Activated CD4-positive, alpha-beta memory T cell treated with anti-CD3 and anti-CD28 coated beads for 36 hours (primary cell): ENCODE measurements at regions of chr12 and their contacts with region 1.

Region 1: DNA sequence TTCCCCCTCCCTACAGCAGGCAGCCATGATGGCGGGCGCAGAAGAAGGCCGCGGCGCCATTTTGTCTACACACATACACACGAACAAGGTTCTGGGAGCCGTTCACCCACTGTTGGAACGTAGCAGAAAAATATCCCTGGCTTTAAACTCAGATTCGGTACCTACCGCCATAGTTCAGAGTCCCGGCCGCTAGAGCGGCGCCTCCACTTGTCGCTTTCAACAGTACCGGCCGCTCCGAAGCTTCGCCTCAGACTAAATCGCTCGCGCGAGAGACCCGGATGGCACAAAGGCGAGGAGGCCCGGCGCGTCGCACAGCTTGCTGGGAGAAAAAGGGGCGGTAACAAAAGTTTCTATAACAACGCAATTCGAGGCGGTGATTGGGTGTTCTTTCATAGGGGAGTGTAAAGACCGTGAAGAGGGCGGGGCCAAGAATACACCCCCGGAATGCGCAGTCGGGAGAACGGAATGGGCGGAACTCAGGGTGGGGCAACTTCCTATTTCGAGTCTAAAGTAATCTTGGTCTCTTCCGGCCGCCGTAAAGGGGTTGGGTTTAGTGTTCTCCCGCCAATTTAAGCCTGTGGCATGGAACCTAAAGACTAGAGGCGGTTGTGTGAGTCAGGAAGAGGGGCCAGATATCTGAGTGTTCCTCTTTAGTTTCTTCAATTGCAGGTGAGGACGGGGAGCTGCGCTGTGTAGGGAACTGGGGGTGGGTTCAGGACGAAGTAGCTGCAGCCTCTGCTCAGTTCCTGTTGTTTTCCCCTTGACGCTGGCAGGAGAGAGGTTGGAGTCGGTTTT is at the starts of genes KNTC1 and RSRC2:
- DNase-seq: peak; percentile 99
- H3K4me3 Mint-ChIP-seq: no peak within 1 kb of the TSS
- H3K27ac Mint-ChIP-seq: no peak within 1 kb of the TSS
- H3K4me1 Mint-ChIP-seq: peaks cover 36% of the 10 kb centered on the region
- H3K27me3 Mint-ChIP-seq: no peaks in the 10 kb centered on the region
- total RNA-seq, gene KNTC1: 136 to 147 TPM
- total RNA-seq, gene RSRC2: 106 to 115 TPM

Region 2: GRCh38 chr12:122225683-122226407 is 301.0 kb before region 1 on chr12 and contains the start of gene DIABLO:
- CTCF ChIA-PET with region 1: no interaction called
- POLR2A ChIA-PET with region 1: interaction called, 4 read pairs
- intact Hi-C with region 1: loop called (anchors 2 kb)
- DNase-seq: peak; percentile 100
- H3K4me3 Mint-ChIP-seq: peak within 1 kb of the TSS; percentile 85
- H3K27ac Mint-ChIP-seq: peak within 1 kb of the TSS; percentile 82
- H3K4me1 Mint-ChIP-seq: peaks cover 43% of the 10 kb centered on the region
- H3K27me3 Mint-ChIP-seq: no peaks in the 10 kb centered on the region
- total RNA-seq, gene DIABLO: 51.8 to 52.0 TPM

Region 3: DNA sequence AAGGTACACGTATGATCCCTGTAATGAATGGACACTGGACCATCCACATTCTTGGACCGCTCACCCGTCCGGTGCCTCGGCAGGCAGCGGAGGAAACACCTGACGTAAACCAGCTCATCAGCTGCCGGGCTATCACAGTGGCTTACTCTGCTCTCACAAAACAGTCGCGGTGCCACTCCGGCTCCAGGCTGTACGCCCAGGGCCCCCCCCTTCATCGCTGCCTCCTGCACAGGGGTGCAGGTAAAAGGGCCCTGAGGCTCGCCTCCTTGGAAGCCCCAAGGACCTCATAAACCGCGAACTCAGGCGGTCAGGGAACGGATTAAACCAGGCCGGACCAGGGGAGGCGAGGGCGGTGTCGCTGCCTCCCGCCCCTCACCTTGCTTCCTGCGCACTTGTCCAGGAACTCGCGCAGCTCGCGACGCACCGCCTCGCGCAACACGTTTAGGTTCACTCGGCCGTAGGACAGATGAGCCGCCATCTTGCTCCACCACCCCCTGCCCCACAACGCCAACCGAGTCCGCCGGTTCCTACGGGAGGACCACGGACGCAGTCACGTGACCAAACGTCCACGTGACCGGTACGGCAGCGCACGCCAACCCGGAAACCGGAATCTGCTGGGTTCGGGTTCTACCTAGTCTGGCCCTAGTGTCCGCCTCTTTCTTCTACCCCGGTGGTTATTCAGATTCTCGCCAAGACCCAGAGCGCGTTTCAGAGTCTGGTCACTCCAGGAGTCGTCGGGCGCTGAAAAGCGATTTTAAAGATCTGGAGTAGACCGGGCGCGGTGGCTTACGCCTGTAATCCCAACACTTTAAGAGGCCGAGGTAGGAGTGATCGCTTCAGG is 260.7 kb before region 1 on chr12 and contains the start of gene VPS33A:
- CTCF ChIA-PET with region 1: no interaction called
- POLR2A ChIA-PET with region 1: no interaction called
- intact Hi-C with region 1: loop called (anchors 2 kb)
- DNase-seq: peak; percentile 97
- H3K4me3 Mint-ChIP-seq: peak within 1 kb of the TSS; percentile 99
- H3K27ac Mint-ChIP-seq: peak within 1 kb of the TSS; percentile 99
- H3K4me1 Mint-ChIP-seq: peaks cover 19% of the 10 kb centered on the region
- H3K27me3 Mint-ChIP-seq: peaks cover 3% of the 10 kb centered on the region
- total RNA-seq, gene VPS33A: 24.2 to 24.6 TPM

Region 4: DNA sequence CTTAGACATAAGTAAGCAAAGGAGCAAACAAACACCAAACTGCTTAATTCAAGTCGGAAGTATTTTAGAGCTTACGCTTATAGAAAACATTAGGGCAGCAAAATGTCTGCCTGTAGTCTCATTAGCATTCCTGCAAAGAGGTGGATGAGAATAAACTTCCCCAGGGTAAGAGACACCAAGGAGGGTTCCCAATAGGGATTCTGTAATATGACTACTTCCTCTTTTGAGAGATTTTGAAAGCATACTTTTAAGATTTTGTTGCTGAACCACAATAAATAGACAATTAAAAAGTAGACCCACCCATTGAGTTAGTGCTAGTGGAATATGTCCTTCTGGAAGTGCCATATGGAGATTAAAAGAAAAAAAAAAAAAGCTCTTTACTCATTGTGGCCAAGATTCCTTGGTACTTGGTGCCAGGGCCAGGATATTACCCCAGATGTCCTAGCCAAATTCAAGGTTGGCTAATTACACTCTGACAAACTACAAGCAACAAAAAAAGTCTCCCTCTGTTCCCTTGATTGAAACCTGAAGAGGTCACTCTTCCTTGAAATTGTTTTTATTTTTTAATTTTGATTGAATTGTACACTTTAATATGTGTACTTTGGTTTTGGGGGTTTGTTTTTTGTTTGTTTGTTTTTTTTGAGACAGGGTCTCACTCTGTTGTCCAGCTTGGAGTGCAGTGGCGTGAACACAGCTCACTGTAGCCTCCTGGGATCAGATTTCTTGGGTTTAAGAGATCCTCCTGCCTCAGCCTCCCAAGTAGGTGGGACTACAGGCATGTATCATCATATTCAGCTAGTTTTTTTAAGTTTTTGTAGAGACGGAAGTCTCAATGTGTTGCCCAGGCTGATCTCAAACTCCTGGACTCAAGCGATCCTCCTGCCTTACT is 113.1 kb before region 1 on chr12:
- CTCF ChIA-PET with region 1: no interaction called
- POLR2A ChIA-PET with region 1: interaction called, 7 read pairs
- intact Hi-C with region 1: loop called (anchors 5 kb)
- DNase-seq: no peak
- H3K4me3 Mint-ChIP-seq: peak overlapping the region; percentile 71
- H3K27ac Mint-ChIP-seq: peak overlapping the region; percentile 96
- H3K4me1 Mint-ChIP-seq: peaks cover 56% of the 10 kb centered on the region
- H3K27me3 Mint-ChIP-seq: no peaks in the 10 kb centered on the region

Region 5: DNA sequence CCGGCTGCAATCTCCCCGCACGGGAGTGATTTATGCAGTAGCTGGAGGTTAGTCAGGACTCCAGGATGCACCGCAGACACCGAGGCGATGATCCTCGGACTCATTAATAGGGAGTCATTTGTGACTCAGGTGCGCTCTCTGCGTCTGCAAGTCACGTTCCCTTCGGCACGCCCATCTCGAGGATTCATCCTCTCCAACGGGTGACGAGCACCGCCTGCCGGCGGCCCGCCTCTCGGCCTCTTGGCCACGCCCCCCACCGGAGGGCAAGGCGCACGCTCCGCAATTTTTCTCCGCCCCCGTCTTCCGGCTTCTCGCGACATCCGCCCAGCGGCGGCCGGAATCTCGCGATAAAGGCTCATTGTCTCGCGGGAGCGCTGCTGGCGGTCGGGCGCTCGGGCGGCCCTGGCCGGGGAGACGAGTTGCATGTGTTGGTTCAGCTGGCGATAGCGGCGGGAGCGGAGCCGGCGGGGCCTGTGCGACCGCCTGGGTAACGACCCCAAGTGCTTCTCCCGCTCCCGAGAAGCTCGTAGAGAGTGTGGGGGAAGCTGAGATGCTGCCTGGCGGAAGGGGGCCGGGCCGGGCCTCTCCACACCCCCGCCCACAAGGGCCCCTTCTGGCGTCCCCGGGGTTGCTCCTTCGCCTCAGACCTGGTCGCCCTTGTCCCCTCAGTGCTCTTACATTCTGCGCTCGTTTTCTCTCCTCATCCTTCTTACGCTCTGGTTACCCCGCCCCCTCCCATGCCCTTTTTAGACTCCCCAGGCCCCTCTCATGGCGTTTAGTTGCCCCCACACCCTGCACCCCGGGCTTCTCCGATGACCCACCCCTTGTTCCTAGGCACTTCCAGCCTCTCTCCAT is 225.8 kb after region 1 on chr12 and contains the start of gene DENR:
- CTCF ChIA-PET with region 1: no interaction called
- POLR2A ChIA-PET with region 1: interaction called, 3 read pairs
- intact Hi-C with region 1: loop called (anchors 1 kb)
- DNase-seq: peak; percentile 100
- H3K4me3 Mint-ChIP-seq: peak within 1 kb of the TSS; percentile 94
- H3K27ac Mint-ChIP-seq: peak within 1 kb of the TSS; percentile 86
- H3K4me1 Mint-ChIP-seq: peaks cover 44% of the 10 kb centered on the region
- H3K27me3 Mint-ChIP-seq: no peaks in the 10 kb centered on the region
- total RNA-seq, gene DENR: 56.9 to 58.2 TPM

Region 6: GRCh38 chr12:123436017-123436964 is 909.4 kb after region 1 on chr12 and contains the start of gene RILPL2:
- CTCF ChIA-PET with region 1: no interaction called
- POLR2A ChIA-PET with region 1: no interaction called
- intact Hi-C with region 1: loop called (anchors 5 kb)
- DNase-seq: peak; percentile 97
- H3K4me3 Mint-ChIP-seq: peak within 1 kb of the TSS; percentile 99
- H3K27ac Mint-ChIP-seq: peak within 1 kb of the TSS; percentile 98
- H3K4me1 Mint-ChIP-seq: peaks cover 30% of the 10 kb centered on the region
- H3K27me3 Mint-ChIP-seq: no peaks in the 10 kb centered on the region
- total RNA-seq, gene RILPL2: 15.4 to 16.6 TPM